ENCODE measurements at regions of chr10 and their contacts with region 1.

Region 1: GRCh38 chr10:87861953-87862678 is 1.2 kb downstream of the KLLN start:
- DNase-seq: peak; percentile 98
- H3K4me3 ChIP-seq: peak overlapping the region; percentile 79 to 95 (median 87)
- H3K27ac ChIP-seq: peak overlapping the region; percentile 93 to 99 (median 98)
- H3K4me1 ChIP-seq: peaks cover 9 to 18% (median 14%) of the 10 kb centered on the region in 4 donors
- H3K27me3 ChIP-seq: no peaks in the 10 kb centered on the region
- CTCF ChIP-seq: no peak
- EP300 ChIP-seq: no peak
- POLR2A ChIP-seq: peak; percentile 62

Region 2: GRCh38 chr10:87817609-87818504 is 44.3 kb before region 1 on chr10 and contains the start of gene ATAD1:
- intact Hi-C with region 1: loop called (anchors 5 kb)
- DNase-seq: peak; percentile 93
- H3K4me3 ChIP-seq: peak within 1 kb of the TSS; percentile 67 to 70 (median 69)
- H3K27ac ChIP-seq: peak within 1 kb of the TSS; percentile 78 to 86 (median 80)
- H3K4me1 ChIP-seq: peaks cover 16 to 35% (median 33%) of the 10 kb centered on the region in 4 donors
- H3K27me3 ChIP-seq: no peaks in the 10 kb centered on the region
- CTCF ChIP-seq: peak; percentile 20 to 26 (median 21)
- EP300 ChIP-seq: no peak
- POLR2A ChIP-seq: no peak
- total RNA-seq, gene ATAD1: 29.1 to 41.3 (median 36.1) TPM

Region 3: GRCh38 chr10:87952612-87953011 is 90.5 kb after region 1 on chr10:
- intact Hi-C with region 1: loop called (anchors 5 kb)
- DNase-seq: no peak
- H3K4me3 ChIP-seq: no peak overlapping the region
- H3K27ac ChIP-seq: no peak overlapping the region
- H3K4me1 ChIP-seq: peaks cover 0 to 8% (median 7%) of the 10 kb centered on the region in 4 donors
- H3K27me3 ChIP-seq: no peaks in the 10 kb centered on the region
- CTCF ChIP-seq: no peak
- EP300 ChIP-seq: no peak
- POLR2A ChIP-seq: no peak

Measured in esophagus muscularis mucosa (tissue), 4 donors.